Activated B cell treated with CpG ODN at 0.5 μM for 24 hours (primary cell): ENCODE measurements at regions of chr1 and their contacts with region 1.

Region 1: DNA sequence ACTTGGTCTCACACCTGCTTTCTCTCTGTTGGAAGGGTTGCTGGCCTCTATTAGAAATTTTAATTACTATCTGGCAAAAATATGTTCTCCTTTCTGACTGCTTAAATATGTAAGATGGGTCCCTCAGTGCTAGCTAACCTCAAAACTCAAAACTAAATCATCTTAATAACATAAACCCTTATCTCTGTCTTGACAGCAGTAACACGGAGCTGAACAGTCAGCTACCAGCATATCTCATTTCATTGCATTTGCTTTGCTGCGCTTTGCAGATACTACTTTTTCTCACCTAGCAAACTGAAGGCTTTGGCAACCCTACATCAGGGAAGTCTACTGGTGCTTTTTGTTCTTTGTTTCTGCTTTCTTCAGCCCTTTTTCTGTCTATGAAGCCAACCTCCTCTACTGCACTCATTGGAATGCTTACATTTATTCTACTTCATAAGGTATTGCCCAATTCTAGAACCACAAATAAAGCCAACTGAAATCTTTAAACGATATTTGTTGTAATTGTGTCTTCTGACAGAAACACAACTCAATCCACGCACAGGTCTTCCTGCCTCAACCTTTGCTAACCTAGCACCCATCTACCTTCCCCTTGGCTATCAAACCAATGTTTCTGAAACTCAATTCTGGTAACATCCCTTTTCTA is 95.6 kb downstream of the RERE start:
- DNase-seq: no peak
- ATAC-seq: no peak
- H3K4me3 Mint-ChIP-seq: no peak overlapping the region
- H3K27ac Mint-ChIP-seq: no peak overlapping the region
- H3K4me1 Mint-ChIP-seq: peaks cover 53% of the 10 kb centered on the region
- H3K27me3 Mint-ChIP-seq: no peaks in the 10 kb centered on the region
- CTCF ChIP-seq: no peak

Region 2: DNA sequence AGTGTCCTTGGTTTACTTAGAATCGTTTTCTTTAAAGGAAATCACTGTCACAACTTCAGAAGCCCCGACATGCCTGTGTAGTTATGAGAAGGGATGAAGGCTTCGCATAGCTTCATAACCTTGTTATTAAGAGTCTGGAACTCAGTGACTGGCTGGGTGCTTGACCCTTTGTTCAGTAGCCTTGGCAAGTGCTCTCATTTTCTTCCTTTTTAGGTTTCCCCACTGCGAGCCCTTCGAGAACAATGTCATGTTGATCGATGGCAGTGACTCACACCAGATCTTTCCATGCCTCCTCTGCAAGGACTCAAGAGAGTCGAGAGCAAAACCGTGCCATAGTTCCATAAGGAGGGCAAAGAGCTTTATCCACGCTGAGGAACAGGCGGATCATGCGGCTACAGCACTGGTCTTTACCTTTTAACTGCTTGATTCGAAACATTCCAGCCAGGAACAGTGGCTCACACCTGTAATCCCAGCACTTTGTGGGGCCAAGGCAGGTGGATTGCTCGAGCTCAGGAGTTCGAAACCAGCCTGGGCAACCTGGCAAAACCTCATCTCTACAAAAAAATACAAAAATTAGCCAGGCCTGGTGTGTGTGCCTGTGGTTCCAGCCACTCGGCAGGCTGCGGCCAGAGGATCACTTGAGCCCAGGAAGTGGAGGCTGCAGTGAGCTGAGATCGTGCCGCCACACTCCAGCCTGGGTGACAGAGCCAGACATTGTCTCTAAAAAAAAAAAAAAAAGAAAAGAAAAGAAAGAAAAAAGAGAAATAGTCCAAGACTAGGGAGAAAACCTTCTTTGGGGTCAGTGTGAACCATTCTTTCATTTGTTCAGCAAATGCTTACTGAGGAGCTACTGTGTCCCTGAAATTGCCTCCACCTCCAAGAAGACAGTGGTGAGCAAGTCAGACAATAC is 600.3 kb before region 1 on chr1:
- CTCF ChIA-PET with region 1: no interaction called
- POLR2A ChIA-PET with region 1: no interaction called
- intact Hi-C with region 1: no loop called
- DNase-seq: no peak
- ATAC-seq: no peak
- H3K4me3 Mint-ChIP-seq: no peak overlapping the region
- H3K27ac Mint-ChIP-seq: no peak overlapping the region
- H3K4me1 Mint-ChIP-seq: peaks cover 8% of the 10 kb centered on the region
- H3K27me3 Mint-ChIP-seq: peaks cover 18% of the 10 kb centered on the region
- CTCF ChIP-seq: no peak

Region 3: GRCh38 chr1:8687039-8687438 is 34.8 kb before region 1 on chr1:
- CTCF ChIA-PET with region 1: no interaction called
- POLR2A ChIA-PET with region 1: no interaction called
- intact Hi-C with region 1: loop called (anchors 5 kb)
- DNase-seq: no peak
- ATAC-seq: no peak
- H3K4me3 Mint-ChIP-seq: peak overlapping the region; percentile 16
- H3K27ac Mint-ChIP-seq: peak overlapping the region; percentile 50
- H3K4me1 Mint-ChIP-seq: peaks cover 69% of the 10 kb centered on the region
- H3K27me3 Mint-ChIP-seq: no peaks in the 10 kb centered on the region
- CTCF ChIP-seq: no peak

Region 4: DNA sequence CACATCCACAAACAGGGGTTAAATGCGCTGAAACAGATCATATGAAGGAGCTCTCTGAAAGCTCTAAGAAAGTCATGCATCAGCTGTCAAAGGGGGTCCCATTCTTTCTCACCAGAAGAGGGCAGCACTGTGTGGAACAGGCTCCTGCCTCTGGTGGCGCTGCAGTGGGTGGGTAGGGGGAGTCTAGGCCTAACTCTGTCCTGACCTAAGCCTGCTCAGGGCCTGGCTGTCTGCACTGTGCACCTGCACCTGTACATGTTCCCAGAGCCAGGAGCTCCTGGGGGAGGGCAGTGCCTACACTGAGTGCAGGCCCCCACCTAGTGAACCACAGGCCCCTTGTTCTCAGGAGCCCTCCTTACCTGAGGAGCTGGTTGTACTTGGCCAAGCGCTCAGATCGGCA is 140.7 kb after region 1 on chr1:
- CTCF ChIA-PET with region 1: no interaction called
- POLR2A ChIA-PET with region 1: no interaction called
- intact Hi-C with region 1: no loop called
- DNase-seq: no peak
- ATAC-seq: peak; percentile 51
- H3K4me3 Mint-ChIP-seq: no peak overlapping the region
- H3K27ac Mint-ChIP-seq: no peak overlapping the region
- H3K4me1 Mint-ChIP-seq: peaks cover 21% of the 10 kb centered on the region
- H3K27me3 Mint-ChIP-seq: no peaks in the 10 kb centered on the region
- CTCF ChIP-seq: no peak